ENCODE measurements at regions of chr12 and their contacts with region 1.

Region 1: GRCh38 chr12:26298785-26299621 is 103.6 kb downstream of the SSPN start:
- DNase-seq: peak; percentile 79
- CTCF ChIP-seq: no peak

Region 2: DNA sequence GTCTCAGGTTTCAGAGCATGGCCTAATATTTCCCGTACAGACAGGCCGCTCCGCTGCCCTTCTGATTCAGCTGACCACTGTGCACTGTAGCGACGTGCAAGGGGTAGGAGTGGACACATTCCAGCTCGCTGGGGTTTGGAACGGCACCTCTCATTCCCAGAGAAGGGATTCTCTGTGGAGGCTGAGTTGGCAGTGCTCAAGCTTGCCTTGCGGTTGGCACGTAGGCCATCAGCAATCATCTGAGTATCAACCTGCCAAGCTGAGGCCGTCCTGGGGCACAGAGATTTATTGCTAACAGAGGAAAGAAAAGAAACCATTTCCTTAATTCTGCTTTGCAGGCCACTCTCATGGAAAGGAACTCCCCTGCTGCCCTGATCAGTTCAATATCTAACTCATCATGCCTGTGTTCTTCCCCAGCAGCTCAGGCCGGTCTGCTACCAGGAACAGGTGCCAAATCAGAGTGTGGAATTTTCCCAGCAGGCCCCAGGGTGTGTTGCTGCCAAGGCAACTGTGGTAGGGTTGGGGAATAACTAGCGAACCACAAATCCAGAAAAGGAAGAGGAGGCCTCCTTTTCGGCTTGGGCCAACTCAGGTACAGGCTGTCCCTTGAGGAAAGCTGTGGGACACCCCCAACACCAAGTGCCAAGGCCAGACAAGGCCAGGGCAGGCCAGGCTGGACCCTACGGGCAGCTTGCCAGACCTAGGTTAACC is 11.2 kb before region 1 on chr12:
- CTCF ChIA-PET with region 1: interaction called, 18 read pairs
- POLR2A ChIA-PET with region 1: no interaction called
- DNase-seq: no peak
- CTCF ChIP-seq: no peak